Body of pancreas (tissue), 4 donors: ENCODE measurements at regions of chr5 and their contacts with region 1.

Region 1: GRCh38 chr5:178120868-178121357 is 7.6 kb downstream of the N4BP3 start:
- DNase-seq: peak; percentile 93 to 98 (median 96)
- ATAC-seq: peak; percentile 97
- H3K4me3 ChIP-seq: no peak overlapping the region
- H3K27ac ChIP-seq: peak overlapping the region in 1 of 4 donors; percentile 5
- H3K4me1 ChIP-seq: peaks cover 13% of the 10 kb centered on the region
- H3K27me3 ChIP-seq: no peaks in the 10 kb centered on the region
- CTCF ChIP-seq: peak; percentile 41 to 81 (median 77)
- POLR2A ChIP-seq: peak in 2 of 3 donors; percentile 31 to 50

Region 2: DNA sequence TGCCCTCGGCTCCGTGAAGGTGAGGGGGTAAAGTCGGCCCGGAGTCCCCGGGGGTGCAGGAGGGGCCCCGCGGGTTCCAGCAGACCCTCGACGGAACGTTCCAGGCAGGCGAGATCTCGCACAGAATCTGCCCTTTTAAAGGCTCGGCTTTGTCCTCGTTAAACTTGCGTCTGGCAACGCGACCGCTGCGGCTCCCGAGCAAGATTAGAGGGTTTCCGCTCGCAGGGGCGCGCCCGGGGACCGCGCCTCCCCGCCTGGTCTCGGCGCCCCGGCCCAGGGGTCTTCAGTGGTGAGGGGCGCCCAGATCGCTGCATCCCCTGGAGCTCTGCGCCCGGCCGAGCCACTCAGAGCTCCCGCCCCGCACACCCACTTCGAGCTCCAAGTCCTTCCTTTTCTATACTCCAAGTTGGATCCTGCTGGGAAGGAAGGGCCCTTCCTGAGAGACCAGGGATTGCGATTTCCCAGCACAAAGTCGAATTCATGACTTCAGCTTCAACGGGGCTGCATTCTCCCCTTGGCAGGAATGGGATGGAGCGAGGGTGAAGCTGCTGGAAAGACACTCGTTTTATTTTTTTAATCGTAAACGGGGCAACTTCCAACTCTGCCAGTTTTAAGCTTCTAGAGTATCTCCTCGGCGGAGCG is 136.2 kb before region 1 on chr5:
- intact Hi-C with region 1: no loop called
- DNase-seq: no peak
- ATAC-seq: no peak
- H3K4me3 ChIP-seq: no peak overlapping the region
- H3K27ac ChIP-seq: no peak overlapping the region
- H3K4me1 ChIP-seq: peaks cover 10% of the 10 kb centered on the region
- H3K27me3 ChIP-seq: no peaks in the 10 kb centered on the region
- CTCF ChIP-seq: no peak
- POLR2A ChIP-seq: no peak

Region 3: DNA sequence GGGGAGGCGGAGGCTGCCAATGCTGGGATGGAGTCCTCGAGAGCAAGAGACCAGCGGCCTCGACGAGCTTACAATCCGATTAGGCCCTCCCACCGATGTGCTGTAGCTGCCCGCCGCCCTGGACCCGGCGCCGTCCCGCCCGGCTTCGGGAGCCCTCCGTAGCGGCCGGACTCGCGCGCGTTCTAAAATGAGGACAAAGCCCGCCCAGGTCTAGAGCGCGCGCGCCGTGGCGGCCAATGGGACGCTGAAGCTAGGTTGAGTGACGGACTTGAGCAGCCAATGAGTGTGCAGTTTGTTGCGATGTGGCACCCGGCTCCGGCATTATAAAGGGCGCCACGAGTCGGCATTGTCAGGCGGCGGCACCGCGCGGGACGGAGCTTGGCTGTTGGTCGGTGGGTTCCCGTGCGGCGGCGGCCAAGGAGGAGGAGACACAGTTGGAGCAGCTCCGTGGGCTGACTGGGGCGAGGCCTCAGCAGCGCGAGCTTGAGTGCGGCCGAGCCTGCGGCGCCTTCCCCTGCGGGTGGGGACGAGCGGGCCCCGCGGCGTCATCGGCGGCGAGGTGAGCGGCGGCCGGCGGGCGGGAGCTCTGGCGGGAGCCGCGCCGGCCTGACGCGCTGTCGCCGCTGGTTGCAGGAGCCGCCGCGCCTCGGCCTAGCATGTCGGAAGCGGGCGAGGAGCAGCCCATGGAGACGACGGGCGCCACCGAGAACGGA is 83.4 kb after region 1 on chr5 and contains the start of gene HNRNPAB:
- intact Hi-C with region 1: loop called (anchors 10 kb)
- DNase-seq: peak; percentile 96 to 97 (median 96)
- ATAC-seq: peak; percentile 95
- H3K4me3 ChIP-seq: peak within 1 kb of the TSS; percentile 26 to 76
- H3K27ac ChIP-seq: peak within 1 kb of the TSS; percentile 81 to 95 (median 88)
- H3K4me1 ChIP-seq: peaks cover 27% of the 10 kb centered on the region
- H3K27me3 ChIP-seq: no peaks in the 10 kb centered on the region
- CTCF ChIP-seq: no peak
- POLR2A ChIP-seq: peak; percentile 100
- total RNA-seq, gene HNRNPAB: 42.0 to 73.8 TPM